ENCODE measurements at regions of chrX and their contacts with region 1.

Region 1: DNA sequence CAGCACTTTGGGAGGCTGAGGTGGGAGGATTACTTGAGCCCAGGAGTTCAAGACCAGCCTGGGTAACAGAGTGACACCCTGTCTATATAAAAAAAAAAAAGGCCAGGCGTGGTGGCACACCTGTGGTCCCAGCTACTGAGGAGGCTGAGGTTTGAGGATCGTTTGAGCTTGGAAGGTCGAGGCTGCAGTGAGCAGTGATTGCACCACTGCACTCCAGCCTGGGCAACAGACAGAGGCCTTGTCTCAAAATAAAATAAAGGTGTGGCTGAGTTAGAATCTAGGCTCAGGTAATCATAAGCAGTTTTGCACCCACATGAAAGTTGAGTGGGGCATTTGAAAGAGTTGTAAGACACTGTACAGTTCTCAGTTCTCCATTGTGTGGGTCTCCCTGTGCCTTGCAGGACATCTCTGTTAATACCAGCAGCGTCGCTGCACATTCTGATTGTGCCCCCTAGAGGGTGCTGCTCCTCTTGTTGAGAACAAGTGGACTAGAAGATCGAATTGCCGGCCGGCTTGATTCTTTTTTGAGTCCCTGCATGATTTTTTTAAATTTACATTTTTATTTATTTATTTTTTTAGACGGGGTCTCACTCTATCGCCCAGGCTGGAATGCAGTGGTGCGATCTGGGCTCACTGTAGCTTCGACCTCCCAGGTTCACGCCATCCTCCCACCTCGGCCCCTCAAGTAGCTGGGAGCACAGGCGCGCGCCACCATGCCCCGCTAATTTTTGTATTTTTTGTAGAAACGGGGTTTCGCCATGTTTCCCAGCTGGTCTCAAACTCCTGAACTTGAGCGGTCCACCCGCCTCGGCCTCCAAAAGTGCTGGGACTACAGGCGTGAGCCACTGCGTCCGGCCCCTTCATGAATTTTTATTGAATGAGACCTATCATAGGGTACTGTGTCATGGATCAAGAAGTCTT is 73.6 kb upstream of the RBMX start:
- DNase-seq: peak; percentile 54 to 73 (median 66)
- ATAC-seq: peak in 1 of 2 donors; percentile 74
- H3K4me3 ChIP-seq: no peak overlapping the region
- H3K27ac ChIP-seq: no peak overlapping the region
- H3K4me1 ChIP-seq: no peaks in the 10 kb centered on the region
- H3K27me3 ChIP-seq: no peaks in the 10 kb centered on the region

Region 2: GRCh38 chrX:137051978-137052642 is 98.0 kb after region 1 on chrX:
- intact Hi-C with region 1: loop called in 1 of 4 experiments (anchors 10 kb)
- DNase-seq: peak; percentile 55 to 84 (median 83)
- ATAC-seq: peak; percentile 86 to 94
- H3K4me3 ChIP-seq: peak overlapping the region; percentile 65
- H3K27ac ChIP-seq: no peak overlapping the region
- H3K4me1 ChIP-seq: peaks cover 1% of the 10 kb centered on the region
- H3K27me3 ChIP-seq: no peaks in the 10 kb centered on the region

Region 3: GRCh38 chrX:137143864-137144263 is 189.7 kb after region 1 on chrX:
- intact Hi-C with region 1: no loop called
- DNase-seq: no peak
- ATAC-seq: no peak
- H3K4me3 ChIP-seq: no peak overlapping the region
- H3K27ac ChIP-seq: no peak overlapping the region
- H3K4me1 ChIP-seq: no peaks in the 10 kb centered on the region
- H3K27me3 ChIP-seq: no peaks in the 10 kb centered on the region

Measured in right cardiac atrium (tissue), 5 donors.